Activated B cell treated with CpG ODN at 0.5 μM for 24 hours (primary cell): ENCODE measurements at regions of chr17 and their contacts with region 1.

Region 1: DNA sequence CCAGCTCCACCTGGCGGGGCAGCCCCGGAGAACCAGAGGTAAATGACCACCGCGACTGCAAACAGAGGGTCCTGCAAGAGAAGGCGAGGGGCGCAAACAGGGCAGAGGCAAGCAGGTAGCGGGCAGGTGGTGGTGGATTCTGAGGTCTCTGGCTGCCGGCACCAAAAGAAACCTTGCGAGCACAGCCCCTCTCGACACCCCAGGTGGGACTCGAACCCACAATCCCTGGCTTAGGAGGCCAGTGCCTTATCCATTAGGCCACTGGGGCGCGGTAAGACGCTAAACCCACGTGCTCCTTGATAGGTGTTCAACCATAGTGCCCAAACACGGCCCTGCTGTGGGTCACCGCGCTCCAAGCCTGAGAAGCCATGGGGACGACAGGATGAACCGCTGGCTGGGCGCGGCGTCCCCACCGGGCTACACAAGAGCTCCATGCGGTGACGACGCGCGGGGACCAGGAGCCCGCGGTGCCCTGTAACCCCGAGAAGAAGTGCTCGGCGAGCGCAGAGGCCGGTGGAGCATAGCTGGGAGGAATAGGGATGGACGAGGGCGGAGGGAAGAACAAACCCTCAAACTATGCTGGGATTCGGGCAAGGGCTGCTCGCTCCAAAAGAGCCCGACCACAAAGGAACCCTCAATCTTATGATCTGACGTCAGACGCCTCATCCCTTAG is 12.4 kb downstream of the ATP5PD start:
- DNase-seq: peak; percentile 76
- ATAC-seq: peak; percentile 72
- H3K4me3 Mint-ChIP-seq: peak overlapping the region; percentile 91
- H3K27ac Mint-ChIP-seq: peak overlapping the region; percentile 89
- H3K4me1 Mint-ChIP-seq: peaks cover 34% of the 10 kb centered on the region
- H3K27me3 Mint-ChIP-seq: peaks cover 1% of the 10 kb centered on the region
- CTCF ChIP-seq: no peak

Region 2: DNA sequence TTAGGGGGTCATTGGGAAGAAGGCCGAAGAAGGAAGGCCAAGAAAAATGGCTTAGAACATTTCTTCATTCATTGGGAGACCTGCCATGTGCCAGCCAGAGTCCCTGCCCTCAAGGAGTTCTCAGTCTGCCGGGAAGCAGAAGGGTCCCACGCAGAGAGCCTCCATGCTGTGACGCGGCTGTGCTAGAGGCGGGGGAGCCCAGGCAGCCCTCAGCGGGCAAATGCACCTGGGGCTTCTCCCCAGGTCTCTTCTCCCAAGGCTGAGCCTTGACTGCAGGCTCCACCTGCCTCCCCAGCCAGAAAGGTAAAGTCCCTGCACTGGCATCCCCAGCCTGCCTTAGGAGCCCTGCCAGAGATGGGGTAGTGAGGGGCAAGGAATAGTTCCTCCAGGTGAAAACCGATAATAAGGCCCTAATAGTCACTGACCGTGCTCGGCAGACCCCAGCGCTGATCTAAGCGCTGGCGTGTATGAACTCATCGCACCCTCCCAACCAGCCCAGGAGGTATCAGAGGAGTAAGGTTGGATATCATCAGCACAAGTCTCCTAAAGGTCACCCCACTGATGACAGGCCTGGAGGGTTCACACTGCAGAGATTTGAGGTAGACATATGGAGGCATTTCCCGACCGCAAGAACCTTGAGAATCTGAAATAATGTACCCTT is 52.9 kb before region 1 on chr17:
- CTCF ChIA-PET with region 1: no interaction called
- POLR2A ChIA-PET with region 1: no interaction called
- intact Hi-C with region 1: no loop called
- DNase-seq: no peak
- ATAC-seq: no peak
- H3K4me3 Mint-ChIP-seq: peak overlapping the region; percentile 82
- H3K27ac Mint-ChIP-seq: peak overlapping the region; percentile 38
- H3K4me1 Mint-ChIP-seq: peaks cover 15% of the 10 kb centered on the region
- H3K27me3 Mint-ChIP-seq: peaks cover 11% of the 10 kb centered on the region
- CTCF ChIP-seq: no peak

Region 3: DNA sequence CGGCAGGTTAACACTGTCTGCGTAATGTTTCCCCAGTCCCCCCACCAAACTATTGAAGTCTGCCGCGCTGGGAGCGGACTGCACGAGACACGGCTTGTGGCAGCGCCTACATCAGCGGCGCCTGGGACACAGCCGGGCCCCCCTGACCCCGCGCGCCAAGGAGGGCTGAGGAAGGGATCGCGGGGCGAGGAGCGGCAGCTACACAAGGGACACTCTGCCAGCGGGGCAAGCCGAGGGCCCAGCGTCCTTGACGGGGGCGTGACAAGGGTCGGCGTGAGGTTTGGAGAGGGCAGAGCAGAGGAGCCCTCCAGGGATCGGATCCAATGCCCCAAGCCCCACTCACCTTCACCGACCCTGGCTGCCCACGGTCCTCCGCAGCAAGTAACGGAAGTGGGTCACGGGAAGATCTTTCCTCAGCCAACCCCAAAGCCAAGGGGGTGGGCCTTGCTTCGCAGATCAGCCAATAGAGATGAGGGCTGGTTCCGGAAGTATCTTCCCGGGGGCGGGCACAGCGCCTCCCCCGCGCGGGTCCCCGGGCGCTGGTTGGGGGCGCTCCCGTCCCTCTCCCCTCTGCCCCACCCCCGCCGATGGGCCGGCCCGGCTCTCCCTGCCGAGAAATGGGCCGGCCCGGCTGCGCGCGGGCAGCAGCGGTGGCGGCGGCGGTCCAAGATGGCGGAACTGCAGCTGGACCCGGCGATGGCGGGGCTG is 12.4 kb after region 1 on chr17 and contains the starts of genes ATP5PD and KCTD2:
- CTCF ChIA-PET with region 1: interaction called, 4 read pairs
- POLR2A ChIA-PET with region 1: interaction called, 31 read pairs
- intact Hi-C with region 1: loop called (anchors 1 kb)
- DNase-seq: peak; percentile 91
- ATAC-seq: peak; percentile 95
- H3K4me3 Mint-ChIP-seq: peak within 1 kb of the TSS; percentile 97
- H3K27ac Mint-ChIP-seq: peak within 1 kb of the TSS; percentile 86
- H3K4me1 Mint-ChIP-seq: peaks cover 37% of the 10 kb centered on the region
- H3K27me3 Mint-ChIP-seq: no peaks in the 10 kb centered on the region
- CTCF ChIP-seq: no peak
- total RNA-seq, gene ATP5PD: 158 and 181 TPM in 2 replicates
- total RNA-seq, gene KCTD2: 19.5 and 20.2 TPM in 2 replicates